H1 (cell line): ENCODE measurements at regions of chr4 and their contacts with region 1.

Region 1: GRCh38 chr4:148015058-148015457 is 283.2 kb downstream of the ARHGAP10 start:
- DNase-seq: no peak
- H3K4me3 ChIP-seq: no peak overlapping the region
- H3K27ac ChIP-seq: no peak overlapping the region
- H3K4me1 ChIP-seq: 0 out of 7 replicates have a peak, but pooled peaks cover 0 to 3% (median 0%) of the 10 kb centered on the region in 4 experiments
- H3K27me3 ChIP-seq: no peaks in the 10 kb centered on the region
- CTCF ChIP-seq: no peak
- EP300 ChIP-seq: no peak
- POLR2A ChIP-seq: no peak
- RAD21 ChIP-seq: no peak

Region 2: GRCh38 chr4:147971116-147971515 is 43.9 kb before region 1 on chr4:
- CTCF ChIA-PET with region 1: no interaction called
- POLR2A ChIA-PET with region 1: no interaction called
- DNase-seq: no peak
- H3K4me3 ChIP-seq: no peak overlapping the region
- H3K27ac ChIP-seq: no peak overlapping the region
- H3K4me1 ChIP-seq: peaks cover 2 to 5% (median 4%) of the 10 kb centered on the region in 4 experiments; a peak in 4 of 7 replicates
- H3K27me3 ChIP-seq: no peaks in the 10 kb centered on the region
- CTCF ChIP-seq: no peak
- EP300 ChIP-seq: no peak
- POLR2A ChIP-seq: no peak
- RAD21 ChIP-seq: no peak

Region 3: GRCh38 chr4:147984065-147984777 is 30.8 kb before region 1 on chr4:
- CTCF ChIA-PET with region 1: interaction called, 11 read pairs
- POLR2A ChIA-PET with region 1: no interaction called
- DNase-seq: peak; percentile 47 to 67
- H3K4me3 ChIP-seq: no peak overlapping the region
- H3K27ac ChIP-seq: no peak overlapping the region
- H3K4me1 ChIP-seq: peaks cover 0 to 16% (median 12%) of the 10 kb centered on the region in 4 experiments; a peak in 5 of 7 replicates
- H3K27me3 ChIP-seq: no peaks in the 10 kb centered on the region
- CTCF ChIP-seq: peak; percentile 47 to 85 (median 85)
- EP300 ChIP-seq: no peak
- POLR2A ChIP-seq: no peak
- RAD21 ChIP-seq: peak; percentile 89 to 90

Region 4: GRCh38 chr4:147994491-147995385 is 20.3 kb before region 1 on chr4:
- CTCF ChIA-PET with region 1: no interaction called
- POLR2A ChIA-PET with region 1: no interaction called
- DNase-seq: no peak
- H3K4me3 ChIP-seq: no peak overlapping the region
- H3K27ac ChIP-seq: no peak overlapping the region
- H3K4me1 ChIP-seq: no peaks in the 10 kb centered on the region
- H3K27me3 ChIP-seq: no peaks in the 10 kb centered on the region; a peak in 1 of 7 replicates
- CTCF ChIP-seq: no peak
- EP300 ChIP-seq: no peak
- POLR2A ChIP-seq: no peak
- RAD21 ChIP-seq: no peak

Region 5: GRCh38 chr4:148240241-148240640 is 225.2 kb after region 1 on chr4:
- CTCF ChIA-PET with region 1: no interaction called
- POLR2A ChIA-PET with region 1: no interaction called
- DNase-seq: no peak
- H3K4me3 ChIP-seq: no peak overlapping the region
- H3K27ac ChIP-seq: no peak overlapping the region
- H3K4me1 ChIP-seq: no peaks in the 10 kb centered on the region
- H3K27me3 ChIP-seq: no peaks in the 10 kb centered on the region
- CTCF ChIP-seq: no peak
- EP300 ChIP-seq: no peak
- POLR2A ChIP-seq: no peak
- RAD21 ChIP-seq: no peak